Naive thymus-derived CD4-positive, alpha-beta T cell (primary cell): ENCODE measurements at regions of chr12 and their contacts with region 1.

Region 1: GRCh38 chr12:55728939-55729823 is at the start of gene CD63:
- DNase-seq: peak in 6 of 9 donors; percentile 26 to 86 (median 38)
- ATAC-seq: peak; percentile 75
- H3K4me3 ChIP-seq: peak within 1 kb of the TSS; percentile 97
- H3K4me3 Mint-ChIP-seq: peak within 1 kb of the TSS; percentile 73 to 94 (median 90)
- H3K27ac ChIP-seq: peak within 1 kb of the TSS; percentile 74
- H3K27ac Mint-ChIP-seq: peak within 1 kb of the TSS; percentile 81 to 95 (median 91)
- H3K4me1 ChIP-seq: peaks cover 13 to 20% of the 10 kb centered on the region in 2 donors
- H3K4me1 Mint-ChIP-seq: peaks cover 33 to 46% (median 38%) of the 10 kb centered on the region in 7 donors
- H3K27me3 ChIP-seq: no peaks in the 10 kb centered on the region
- H3K27me3 Mint-ChIP-seq: no peaks in the 10 kb centered on the region
- total RNA-seq, gene CD63: 43.2 to 216 (median 54.3) TPM

Region 2: DNA sequence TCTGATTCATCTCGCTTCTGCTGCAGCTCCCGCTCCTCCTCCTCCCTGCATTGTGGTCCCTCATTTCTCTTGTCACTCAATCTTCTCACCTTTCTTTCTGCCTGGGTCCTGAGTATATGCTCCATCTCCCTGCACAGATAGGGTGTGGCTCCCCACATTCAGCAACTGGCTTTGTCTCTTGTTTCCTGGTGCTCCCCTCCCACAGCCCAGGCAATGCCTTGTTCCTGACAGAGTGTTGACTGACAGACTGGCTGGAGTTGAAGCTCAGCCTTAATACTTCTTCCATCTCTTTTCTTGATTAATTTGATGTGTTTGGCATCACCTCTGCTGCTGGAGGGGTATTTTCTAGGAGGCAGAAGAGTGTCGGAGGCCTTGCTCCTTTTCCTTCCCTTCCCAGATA is 1805.6 kb before region 1 on chr12:
- CTCF ChIA-PET with region 1: no interaction called
- POLR2A ChIA-PET with region 1: no interaction called
- intact Hi-C with region 1: no loop called
- DNase-seq: no peak
- ATAC-seq: no peak
- H3K4me3 ChIP-seq: no peak overlapping the region
- H3K4me3 Mint-ChIP-seq: no peak overlapping the region
- H3K27ac ChIP-seq: no peak overlapping the region
- H3K27ac Mint-ChIP-seq: no peak overlapping the region
- H3K4me1 ChIP-seq: no peaks in the 10 kb centered on the region
- H3K4me1 Mint-ChIP-seq: peaks cover 0 to 7% (median 1%) of the 10 kb centered on the region in 7 donors
- H3K27me3 ChIP-seq: peaks cover 13 to 32% of the 10 kb centered on the region in 2 donors
- H3K27me3 Mint-ChIP-seq: peaks cover 84 to 91% (median 87%) of the 10 kb centered on the region in 5 donors

Region 3: DNA sequence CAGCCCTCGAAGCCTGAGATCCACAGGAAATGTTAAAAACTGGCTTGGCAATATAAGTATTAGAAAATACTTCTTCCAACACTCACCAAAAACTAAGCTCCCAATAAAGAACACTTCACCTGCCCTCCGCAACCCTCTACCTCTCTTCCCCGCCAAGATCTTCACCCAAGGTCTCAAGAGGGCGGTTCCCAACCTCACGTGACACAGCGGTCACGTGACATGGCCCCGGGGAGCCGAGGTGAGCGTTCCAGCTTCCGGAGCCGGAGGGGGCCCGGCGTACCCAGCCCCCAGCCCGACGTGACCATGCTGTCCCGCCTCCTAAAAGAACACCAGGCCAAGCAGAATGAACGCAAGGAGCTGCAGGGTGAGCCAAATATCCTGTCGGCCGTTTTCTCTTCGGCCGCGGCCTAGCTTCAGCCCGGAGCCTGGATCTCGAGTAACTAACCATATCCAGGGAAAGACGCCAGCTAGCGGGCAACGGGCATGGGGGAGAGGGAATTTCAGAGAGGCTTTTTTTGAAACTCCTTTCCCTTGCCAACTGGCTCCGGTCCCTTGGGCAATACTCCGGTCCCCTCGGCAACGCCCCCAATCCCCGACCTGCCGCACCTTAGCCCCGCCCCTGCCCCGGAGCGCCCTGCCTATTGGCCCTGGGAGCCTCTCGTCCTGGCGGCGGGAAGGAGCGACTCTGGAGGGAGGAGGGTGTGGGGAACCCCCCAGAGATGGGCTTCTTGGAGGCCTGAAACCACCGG is 13.2 kb before region 1 on chr12 and contains the start of gene BLOC1S1:
- CTCF ChIA-PET with region 1: no interaction called
- POLR2A ChIA-PET with region 1: interaction called, 23 read pairs
- intact Hi-C with region 1: loop called (anchors 1 kb)
- DNase-seq: peak; percentile 82 to 95 (median 90)
- ATAC-seq: peak; percentile 96
- H3K4me3 ChIP-seq: peak within 1 kb of the TSS; percentile 96
- H3K4me3 Mint-ChIP-seq: peak within 1 kb of the TSS; percentile 83 to 98 (median 94)
- H3K27ac ChIP-seq: peak within 1 kb of the TSS; percentile 92
- H3K27ac Mint-ChIP-seq: peak within 1 kb of the TSS; percentile 91 to 98 (median 97)
- H3K4me1 ChIP-seq: peaks cover 19 to 23% of the 10 kb centered on the region in 2 donors
- H3K4me1 Mint-ChIP-seq: peaks cover 15 to 41% (median 36%) of the 10 kb centered on the region in 7 donors
- H3K27me3 ChIP-seq: no peaks in the 10 kb centered on the region
- H3K27me3 Mint-ChIP-seq: peaks cover 0 to 21% (median 0%) of the 10 kb centered on the region in 5 donors
- total RNA-seq, gene BLOC1S1: 37.6 to 112 (median 71.5) TPM

Region 4: GRCh38 chr12:55797068-55797467 is 67.9 kb after region 1 on chr12:
- CTCF ChIA-PET with region 1: interaction called, 4 read pairs
- POLR2A ChIA-PET with region 1: no interaction called
- intact Hi-C with region 1: loop called in 1 of 2 experiments (anchors 1 kb)
- DNase-seq: peak in 4 of 9 donors; percentile 19 to 30 (median 26)
- ATAC-seq: peak; percentile 44
- H3K4me3 ChIP-seq: no peak overlapping the region
- H3K4me3 Mint-ChIP-seq: no peak overlapping the region
- H3K27ac ChIP-seq: no peak overlapping the region
- H3K27ac Mint-ChIP-seq: peak overlapping the region in 1 of 9 donors; percentile 23
- H3K4me1 ChIP-seq: no peaks in the 10 kb centered on the region
- H3K4me1 Mint-ChIP-seq: peaks cover 0 to 20% (median 11%) of the 10 kb centered on the region in 7 donors
- H3K27me3 ChIP-seq: no peaks in the 10 kb centered on the region
- H3K27me3 Mint-ChIP-seq: no peaks in the 10 kb centered on the region